ENCODE measurements at regions of chr14 and their contacts with region 1.

Region 1: DNA sequence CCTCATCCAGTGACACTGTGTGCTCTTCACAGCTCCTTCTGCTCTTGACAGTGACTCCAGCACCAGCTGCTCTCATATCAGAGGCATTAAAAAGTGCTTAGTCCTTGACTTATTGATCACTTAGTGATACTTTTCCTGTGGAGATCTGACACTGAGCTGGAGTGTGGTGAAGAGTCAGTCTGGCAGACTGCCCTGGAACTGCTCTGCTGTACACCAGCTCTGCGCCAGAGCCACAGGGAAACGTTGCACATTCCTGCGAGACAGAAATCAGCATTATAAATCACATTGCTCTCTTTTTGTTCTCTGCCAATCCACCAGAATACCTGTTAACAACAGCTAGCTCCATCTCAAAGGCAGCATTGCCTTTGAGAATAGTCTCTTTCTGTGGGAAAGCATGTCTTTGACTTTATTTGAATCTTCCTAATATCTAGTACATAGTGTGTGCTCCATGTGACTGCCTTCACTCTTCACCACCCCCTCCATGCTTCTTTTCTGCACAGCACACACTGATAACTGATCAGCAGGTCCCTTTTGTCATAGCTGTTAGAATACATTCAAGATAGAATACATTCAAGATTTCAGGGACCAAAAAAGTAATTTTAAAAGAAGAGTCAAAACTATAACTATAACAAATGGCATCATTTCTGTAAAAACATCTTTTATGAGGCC is 48.2 kb upstream of the VSX2 start:
- DNase-seq: no peak
- H3K4me3 ChIP-seq: no peak overlapping the region
- H3K27ac ChIP-seq: no peak overlapping the region
- H3K4me1 ChIP-seq: no peaks in the 10 kb centered on the region
- H3K27me3 ChIP-seq: no peaks in the 10 kb centered on the region
- CTCF ChIP-seq: no peak

Region 2: GRCh38 chr14:74105381-74105780 is 85.7 kb before region 1 on chr14:
- CTCF ChIA-PET with region 1: no interaction called
- POLR2A ChIA-PET with region 1: no interaction called
- intact Hi-C with region 1: no loop called
- DNase-seq: no peak
- H3K4me3 ChIP-seq: no peak overlapping the region
- H3K27ac ChIP-seq: no peak overlapping the region
- H3K4me1 ChIP-seq: no peaks in the 10 kb centered on the region
- H3K27me3 ChIP-seq: no peaks in the 10 kb centered on the region
- CTCF ChIP-seq: no peak

Region 3: GRCh38 chr14:74242021-74242779 is 51.2 kb after region 1 on chr14:
- CTCF ChIA-PET with region 1: no interaction called
- POLR2A ChIA-PET with region 1: interaction called, 14 read pairs
- intact Hi-C with region 1: no loop called
- DNase-seq: no peak
- H3K4me3 ChIP-seq: no peak overlapping the region
- H3K27ac ChIP-seq: no peak overlapping the region
- H3K4me1 ChIP-seq: no peaks in the 10 kb centered on the region
- H3K27me3 ChIP-seq: peaks cover 77% of the 10 kb centered on the region
- CTCF ChIP-seq: no peak

Region 4: GRCh38 chr14:75399821-75400678 is 1209.0 kb after region 1 on chr14:
- CTCF ChIA-PET with region 1: no interaction called
- POLR2A ChIA-PET with region 1: no interaction called
- intact Hi-C with region 1: no loop called
- DNase-seq: peak; percentile 100
- H3K4me3 ChIP-seq: peak overlapping the region; percentile 17; the same call in 1 of the 2 replicates
- H3K27ac ChIP-seq: peak overlapping the region; percentile 70
- H3K4me1 ChIP-seq: peaks cover 31% of the 10 kb centered on the region
- H3K27me3 ChIP-seq: no peaks in the 10 kb centered on the region
- CTCF ChIP-seq: no peak